Gastrocnemius medialis (tissue), 4 donors: ENCODE measurements at regions of chr1 and their contacts with region 1.

Region 1: DNA sequence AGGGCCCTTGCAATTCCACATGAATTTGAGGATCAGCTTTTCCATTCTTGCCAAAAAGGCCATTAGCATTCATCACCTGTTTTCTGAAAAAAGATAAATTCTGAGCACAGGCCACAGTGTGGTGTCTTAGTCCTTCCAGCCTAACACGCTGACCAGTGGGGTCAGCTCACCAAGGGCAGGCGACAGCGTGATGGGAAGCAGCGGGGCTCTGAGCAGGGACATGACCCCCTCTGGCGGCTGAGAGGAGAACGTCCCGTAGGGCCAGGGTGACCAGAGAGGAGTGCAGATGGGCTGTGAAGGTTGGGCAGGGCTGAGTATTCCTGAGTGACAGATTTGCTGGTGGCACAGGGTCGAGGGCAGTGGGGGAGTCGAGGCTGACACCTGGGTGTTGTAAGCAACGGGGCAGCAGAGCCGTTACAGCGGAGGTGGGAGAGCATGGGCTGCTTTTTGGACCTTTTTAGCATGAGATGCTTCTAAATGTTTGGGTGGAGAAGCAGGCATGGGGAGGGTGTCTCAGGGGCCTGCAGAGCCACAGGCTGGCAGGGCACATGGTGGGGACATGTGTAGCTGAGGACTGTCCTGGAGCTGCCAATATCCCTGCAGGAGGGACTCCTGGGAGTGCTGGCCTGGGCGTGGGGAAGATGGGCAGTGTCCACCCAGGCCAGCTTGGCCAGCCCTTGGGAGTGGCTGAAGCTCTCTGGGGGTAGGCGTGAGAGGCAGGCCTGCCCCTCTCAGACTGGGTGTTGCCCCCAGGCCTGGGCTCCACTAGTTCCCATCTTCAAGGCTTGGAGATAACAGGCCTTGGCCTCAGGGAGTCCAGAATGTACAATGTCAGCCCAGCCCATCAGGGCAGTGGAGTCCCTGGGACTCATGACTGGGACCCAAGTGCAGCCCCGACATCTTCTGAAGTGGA is 8.6 kb upstream of the CALML6 start:
- DNase-seq: peak; percentile 79 to 84
- ATAC-seq: peak; percentile 62 to 71
- H3K4me3 ChIP-seq: no peak overlapping the region
- H3K27ac ChIP-seq: peak overlapping the region; percentile 4 to 75 (median 64)
- H3K4me1 ChIP-seq: peaks cover 8 to 18% of the 10 kb centered on the region in 2 donors
- H3K27me3 ChIP-seq: no peaks in the 10 kb centered on the region
- CTCF ChIP-seq: peak; percentile 88 to 94 (median 93)
- POLR2A ChIP-seq: no peak

Region 2: DNA sequence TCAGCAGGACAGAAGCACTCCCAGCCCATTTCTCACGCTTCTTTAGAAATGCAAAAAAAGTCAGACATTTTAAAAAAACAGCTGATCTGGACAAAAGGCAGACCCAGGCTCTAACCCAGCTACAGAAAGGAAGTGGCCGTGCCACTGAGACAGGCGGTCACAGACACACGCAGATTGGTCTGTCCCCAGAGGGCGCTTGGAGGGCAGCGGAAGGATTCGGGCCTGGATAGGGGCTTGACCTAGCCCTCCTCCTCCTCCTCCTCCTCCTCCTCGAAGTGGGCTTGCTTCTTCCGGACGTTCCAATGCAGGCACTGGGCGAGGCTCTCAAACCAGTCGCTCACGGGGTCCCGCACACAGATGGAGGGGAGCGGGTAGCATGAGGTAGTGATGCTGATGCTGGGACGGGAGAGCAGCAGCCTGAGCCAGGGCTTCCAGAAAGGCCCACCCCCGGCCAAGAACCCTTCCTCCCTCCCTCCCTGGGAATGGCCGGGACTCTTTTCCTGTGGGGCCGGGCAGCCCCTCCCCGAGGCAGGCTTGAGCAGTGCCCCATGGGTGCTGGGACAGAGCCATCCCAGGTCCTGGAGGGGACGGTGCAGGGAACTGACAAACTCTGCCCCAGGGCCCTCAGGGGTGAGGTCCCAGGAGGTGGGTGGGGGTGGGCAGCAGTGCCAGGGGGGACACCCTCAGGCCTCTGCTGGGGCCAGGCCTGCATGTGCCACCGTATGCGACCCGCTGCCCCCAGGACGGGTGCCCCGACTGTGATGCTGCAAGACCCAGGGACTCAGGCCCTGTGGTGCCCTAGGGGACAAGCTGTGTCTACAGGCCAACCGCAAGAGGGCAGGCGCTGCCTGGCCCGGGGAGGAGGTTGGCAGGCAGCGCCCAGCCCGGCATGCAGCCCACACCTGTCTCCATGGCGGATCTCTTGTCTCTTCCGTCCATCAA is 153.5 kb before region 1 on chr1:
- in situ Hi-C with region 1: no loop called
- intact Hi-C with region 1: loop called (anchors 2 kb)
- DNase-seq: peak; percentile 42 to 75
- ATAC-seq: peak; percentile 69 to 84
- H3K4me3 ChIP-seq: no peak overlapping the region
- H3K27ac ChIP-seq: peak overlapping the region in 3 of 4 donors; percentile 35 to 62 (median 37)
- H3K4me1 ChIP-seq: peaks cover 0 to 2% of the 10 kb centered on the region in 2 donors
- H3K27me3 ChIP-seq: no peaks in the 10 kb centered on the region
- CTCF ChIP-seq: peak; percentile 60 to 76 (median 66)
- POLR2A ChIP-seq: no peak

Region 3: GRCh38 chr1:1763657-1764616 is 142.5 kb before region 1 on chr1:
- in situ Hi-C with region 1: loop called in 2 of 4 experiments (anchors 5 to 10 kb)
- intact Hi-C with region 1: no loop called
- DNase-seq: peak in 1 of 2 donors; percentile 75
- ATAC-seq: peak; percentile 39 to 83
- H3K4me3 ChIP-seq: no peak overlapping the region
- H3K27ac ChIP-seq: peak overlapping the region in 1 of 4 donors; percentile 25
- H3K4me1 ChIP-seq: peaks cover 0 to 6% of the 10 kb centered on the region in 2 donors
- H3K27me3 ChIP-seq: no peaks in the 10 kb centered on the region
- CTCF ChIP-seq: no peak
- POLR2A ChIP-seq: no peak

Region 4: DNA sequence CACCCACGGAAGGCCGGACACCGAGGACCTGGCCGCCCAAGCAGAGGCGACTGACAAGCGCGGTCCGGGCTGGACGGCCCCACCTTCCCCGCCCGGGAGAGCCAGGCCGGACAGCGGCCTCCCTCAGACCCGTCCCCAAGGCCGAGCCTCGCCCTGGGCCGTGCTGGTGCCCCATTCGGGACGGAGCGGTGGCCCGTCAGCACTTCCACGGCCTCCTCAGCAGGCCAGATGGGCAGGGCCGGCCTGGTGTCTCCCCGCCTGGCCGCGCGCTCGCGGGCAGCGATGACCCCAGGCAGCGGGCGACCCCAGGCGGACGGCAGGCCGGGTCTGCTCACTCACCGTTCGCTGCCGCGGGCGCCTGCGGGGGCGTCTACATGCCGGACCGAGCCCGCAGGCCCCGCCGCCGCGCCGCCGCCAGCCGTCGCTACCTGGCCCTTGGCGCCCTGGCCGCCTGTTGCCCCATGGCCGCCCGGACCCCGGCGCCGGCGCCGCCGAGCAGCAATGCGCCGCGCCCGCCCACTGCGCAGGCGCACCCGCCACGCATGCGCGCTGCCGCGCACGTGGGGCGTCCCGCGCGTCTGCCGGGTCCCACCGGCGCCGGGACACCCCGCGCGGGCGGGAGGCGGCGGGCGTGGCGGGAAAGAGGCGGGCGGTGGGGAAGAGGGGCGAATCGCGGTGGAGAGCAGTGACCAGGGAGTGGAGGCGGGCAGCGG is 128.3 kb before region 1 on chr1 and contains the start of gene NADK:
- in situ Hi-C with region 1: no loop called
- intact Hi-C with region 1: loop called (anchors 2 kb)
- DNase-seq: peak in 1 of 2 donors; percentile 59
- ATAC-seq: peak; percentile 82 to 83
- H3K4me3 ChIP-seq: peak within 1 kb of the TSS; percentile 79 to 95 (median 86)
- H3K27ac ChIP-seq: peak within 1 kb of the TSS; percentile 89 to 99 (median 94)
- H3K4me1 ChIP-seq: peaks cover 47 to 62% of the 10 kb centered on the region in 2 donors
- H3K27me3 ChIP-seq: no peaks in the 10 kb centered on the region
- CTCF ChIP-seq: peak in 1 of 5 experiments; percentile 24
- POLR2A ChIP-seq: peak; percentile 78 to 84
- total RNA-seq, gene NADK: 20.1 to 33.1 (median 32.5) TPM

Region 5: DNA sequence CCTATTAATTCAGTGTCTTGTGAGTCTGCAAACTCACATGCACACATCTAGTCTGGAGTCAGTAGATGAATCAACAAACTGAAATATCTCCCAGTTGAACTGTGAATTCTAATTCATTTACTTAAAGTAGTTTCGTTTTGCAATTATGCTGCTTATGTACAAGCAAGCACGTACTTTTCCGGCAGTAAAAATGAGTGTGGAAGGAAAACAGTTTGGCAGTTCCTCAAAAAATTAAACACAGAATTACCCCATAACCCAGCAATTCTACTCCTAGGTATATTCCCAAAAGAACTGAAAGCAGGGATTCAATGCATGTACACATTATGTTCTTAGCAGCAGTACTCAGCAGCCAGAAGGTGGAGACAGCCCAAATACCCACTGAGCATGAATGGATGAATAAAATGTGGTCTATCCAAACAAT is 64.9 kb before region 1 on chr1:
- in situ Hi-C with region 1: loop called in 1 of 4 experiments (anchors 10 kb)
- intact Hi-C with region 1: no loop called
- DNase-seq: no peak
- ATAC-seq: no peak
- H3K4me3 ChIP-seq: no peak overlapping the region
- H3K27ac ChIP-seq: peak overlapping the region in 1 of 4 donors; percentile 21
- H3K4me1 ChIP-seq: peaks cover 41 to 43% of the 10 kb centered on the region in 2 donors
- H3K27me3 ChIP-seq: no peaks in the 10 kb centered on the region
- CTCF ChIP-seq: no peak
- POLR2A ChIP-seq: no peak

Region 6: GRCh38 chr1:1858382-1859086 is 47.9 kb before region 1 on chr1:
- in situ Hi-C with region 1: no loop called
- intact Hi-C with region 1: loop called (anchors 1 kb)
- DNase-seq: peak; percentile 63 to 69
- ATAC-seq: peak; percentile 86 to 87
- H3K4me3 ChIP-seq: peak overlapping the region; percentile 19 to 39 (median 30)
- H3K27ac ChIP-seq: peak overlapping the region; percentile 69 to 76 (median 74)
- H3K4me1 ChIP-seq: peaks cover 60 to 69% of the 10 kb centered on the region in 2 donors
- H3K27me3 ChIP-seq: no peaks in the 10 kb centered on the region
- CTCF ChIP-seq: peak in 2 of 5 experiments; percentile 38 to 45
- POLR2A ChIP-seq: peak in 1 of 2 donors; percentile 35

Region 7: GRCh38 chr1:1890506-1891348 is 15.7 kb before region 1 on chr1 and contains the start of gene GNB1:
- in situ Hi-C with region 1: no loop called
- intact Hi-C with region 1: loop called (anchors 1 kb)
- DNase-seq: peak; percentile 68 to 80
- ATAC-seq: peak; percentile 87 to 89
- H3K4me3 ChIP-seq: peak within 1 kb of the TSS; percentile 74 to 82 (median 80)
- H3K27ac ChIP-seq: peak within 1 kb of the TSS; percentile 87 to 97 (median 96)
- H3K4me1 ChIP-seq: peaks cover 49 to 63% of the 10 kb centered on the region in 2 donors
- H3K27me3 ChIP-seq: no peaks in the 10 kb centered on the region
- CTCF ChIP-seq: peak in 1 of 5 experiments; percentile 5
- POLR2A ChIP-seq: peak; percentile 72 to 75
- total RNA-seq, gene GNB1: 29.9 to 44.1 (median 37.2) TPM